Gastrocnemius medialis (tissue), 4 donors: ENCODE measurements at regions of chr4 and their contacts with region 1.

Region 1: DNA sequence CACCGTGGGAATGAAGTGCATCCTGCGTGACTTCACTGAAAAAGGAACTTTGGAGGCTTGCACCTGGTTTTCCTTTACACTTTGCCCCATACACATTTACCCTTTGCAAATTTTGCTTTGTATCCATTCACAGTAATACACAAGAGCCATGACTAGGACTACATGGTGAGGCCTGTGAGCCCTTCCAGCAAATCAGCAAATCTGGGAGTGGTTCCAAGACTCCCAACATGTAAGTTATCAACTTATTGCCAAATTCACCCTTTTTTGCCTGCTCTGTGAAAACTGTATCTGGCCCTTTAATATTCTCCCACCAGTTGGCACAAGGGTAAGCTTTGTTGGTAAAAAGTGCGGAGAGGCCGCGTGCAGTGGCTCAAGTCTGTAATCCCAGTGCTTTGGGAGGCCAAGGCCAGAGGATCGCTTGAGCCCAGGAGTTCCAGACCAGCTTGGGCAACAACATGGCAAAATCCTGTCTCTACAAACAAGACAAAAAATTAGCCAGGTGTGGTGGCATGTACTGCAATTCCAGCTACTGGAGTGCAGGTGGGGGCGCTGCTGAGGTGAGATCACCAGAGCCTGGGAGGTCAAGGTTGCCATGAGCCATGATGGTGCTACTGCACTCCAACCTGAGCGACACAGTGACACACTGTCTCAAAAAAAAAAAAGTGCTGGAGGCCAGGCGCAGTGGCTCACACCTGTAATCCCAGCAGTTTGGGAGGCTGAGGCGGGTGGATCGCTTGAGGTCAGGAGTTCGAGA is 5.0 kb downstream of the PRMT9 start:
- DNase-seq: no peak
- ATAC-seq: no peak
- H3K4me3 ChIP-seq: no peak overlapping the region
- H3K27ac ChIP-seq: no peak overlapping the region
- H3K4me1 ChIP-seq: peaks cover 13 to 16% of the 10 kb centered on the region in 2 donors
- H3K27me3 ChIP-seq: no peaks in the 10 kb centered on the region
- CTCF ChIP-seq: no peak
- POLR2A ChIP-seq: no peak

Region 2: GRCh38 chr4:147542229-147542990 is 136.6 kb before region 1 on chr4:
- in situ Hi-C with region 1: no loop called
- intact Hi-C with region 1: no loop called
- DNase-seq: no peak
- ATAC-seq: no peak
- H3K4me3 ChIP-seq: no peak overlapping the region
- H3K27ac ChIP-seq: no peak overlapping the region
- H3K4me1 ChIP-seq: no peaks in the 10 kb centered on the region
- H3K27me3 ChIP-seq: no peaks in the 10 kb centered on the region
- CTCF ChIP-seq: no peak
- POLR2A ChIP-seq: no peak

Region 3: GRCh38 chr4:147629783-147630730 is 48.9 kb before region 1 on chr4:
- in situ Hi-C with region 1: loop called in 1 of 4 experiments (anchors 10 kb)
- intact Hi-C with region 1: no loop called
- DNase-seq: no peak
- ATAC-seq: no peak
- H3K4me3 ChIP-seq: no peak overlapping the region
- H3K27ac ChIP-seq: no peak overlapping the region
- H3K4me1 ChIP-seq: no peaks in the 10 kb centered on the region
- H3K27me3 ChIP-seq: no peaks in the 10 kb centered on the region
- CTCF ChIP-seq: no peak
- POLR2A ChIP-seq: no peak

Region 4: GRCh38 chr4:147651563-147651962 is 27.4 kb before region 1 on chr4:
- in situ Hi-C with region 1: no loop called
- intact Hi-C with region 1: no loop called
- DNase-seq: no peak
- ATAC-seq: no peak
- H3K4me3 ChIP-seq: no peak overlapping the region
- H3K27ac ChIP-seq: no peak overlapping the region
- H3K4me1 ChIP-seq: peaks cover 0 to 13% of the 10 kb centered on the region in 2 donors
- H3K27me3 ChIP-seq: no peaks in the 10 kb centered on the region
- CTCF ChIP-seq: no peak
- POLR2A ChIP-seq: no peak

Region 5: DNA sequence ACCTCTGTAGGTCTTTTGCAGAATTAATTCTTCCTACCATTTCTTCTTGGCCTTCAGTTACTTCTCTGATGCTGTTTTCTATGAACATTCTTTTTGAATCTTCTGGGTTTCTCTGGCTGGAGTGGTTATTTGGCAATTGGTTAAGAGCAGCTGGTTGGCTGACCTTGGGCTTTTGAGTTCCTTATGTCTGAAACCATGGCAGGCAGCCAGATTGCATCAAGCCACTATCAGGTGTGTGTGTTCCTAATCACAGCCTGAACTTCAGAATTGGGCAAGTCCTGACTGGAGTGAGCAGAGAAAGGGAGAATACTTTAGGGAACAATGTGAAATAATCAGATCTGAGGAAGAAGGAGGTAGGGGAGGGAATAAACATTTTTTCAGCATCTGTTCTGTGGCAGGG is 143.2 kb after region 1 on chr4:
- in situ Hi-C with region 1: no loop called
- intact Hi-C with region 1: no loop called
- DNase-seq: peak; percentile 94 to 95
- ATAC-seq: peak; percentile 81 to 89
- H3K4me3 ChIP-seq: no peak overlapping the region
- H3K27ac ChIP-seq: peak overlapping the region; percentile 83 to 95 (median 92)
- H3K4me1 ChIP-seq: peaks cover 60 to 61% of the 10 kb centered on the region in 2 donors
- H3K27me3 ChIP-seq: no peaks in the 10 kb centered on the region
- CTCF ChIP-seq: no peak
- POLR2A ChIP-seq: no peak